Psoas muscle (tissue), 8 donors: ENCODE measurements at regions of chr3 and their contacts with region 1.

Region 1: GRCh38 chr3:46368569-46368968 is 2.2 kb upstream of the CCR5 start:
- DNase-seq: peak; percentile 39 to 74
- ATAC-seq: peak in 3 of 4 donors; percentile 42 to 64 (median 48)
- H3K4me3 ChIP-seq: no peak overlapping the region
- H3K27ac ChIP-seq: no peak overlapping the region
- H3K4me1 ChIP-seq: no peaks in the 10 kb centered on the region
- H3K27me3 ChIP-seq: peaks cover 0 to 4% (median 2%) of the 10 kb centered on the region in 3 donors
- CTCF ChIP-seq: no peak

Region 2: DNA sequence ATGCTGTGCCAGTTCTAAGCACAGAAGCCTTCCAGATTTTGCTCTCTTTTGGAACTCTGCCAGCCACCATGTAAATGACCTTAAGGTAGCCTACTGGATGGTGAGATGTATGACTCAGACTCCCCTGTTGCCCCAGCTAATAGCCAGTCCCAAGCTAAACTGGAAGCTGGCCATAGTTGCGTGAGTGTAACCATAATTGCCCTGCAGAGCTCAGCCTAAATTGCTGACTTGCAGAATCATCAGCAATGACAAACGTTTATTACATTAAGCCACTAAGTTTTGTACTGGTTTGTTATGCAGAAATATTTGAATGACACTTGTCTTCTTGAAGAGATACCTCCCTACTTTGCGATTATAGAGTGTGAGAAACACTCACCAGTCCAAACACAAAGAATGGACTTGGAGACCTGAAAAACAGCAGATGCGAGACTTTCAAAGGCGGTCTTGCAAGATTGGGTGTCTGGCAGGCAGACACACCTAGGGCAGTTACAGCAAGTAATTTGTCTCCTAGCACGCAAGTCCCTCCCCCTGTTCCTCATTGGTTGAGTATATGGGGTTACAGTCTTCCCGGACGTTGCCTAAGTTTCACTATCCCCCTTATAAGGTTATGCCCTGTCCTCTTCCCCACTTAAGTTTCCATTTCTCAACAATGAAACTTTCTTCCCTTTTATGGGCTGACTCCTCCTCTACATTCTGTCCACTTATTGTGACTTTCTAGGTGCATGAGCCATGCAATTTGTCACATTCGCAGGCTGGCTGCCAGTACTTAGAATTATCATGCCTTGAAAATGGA is 257.7 kb before region 1 on chr3:
- intact Hi-C with region 1: loop called in 1 of 2 experiments (anchors 10 kb)
- DNase-seq: no peak
- ATAC-seq: peak; percentile 67 to 82 (median 74)
- H3K4me3 ChIP-seq: no peak overlapping the region
- H3K27ac ChIP-seq: no peak overlapping the region
- H3K4me1 ChIP-seq: peaks cover 9% of the 10 kb centered on the region
- H3K27me3 ChIP-seq: no peaks in the 10 kb centered on the region
- CTCF ChIP-seq: no peak

Region 3: DNA sequence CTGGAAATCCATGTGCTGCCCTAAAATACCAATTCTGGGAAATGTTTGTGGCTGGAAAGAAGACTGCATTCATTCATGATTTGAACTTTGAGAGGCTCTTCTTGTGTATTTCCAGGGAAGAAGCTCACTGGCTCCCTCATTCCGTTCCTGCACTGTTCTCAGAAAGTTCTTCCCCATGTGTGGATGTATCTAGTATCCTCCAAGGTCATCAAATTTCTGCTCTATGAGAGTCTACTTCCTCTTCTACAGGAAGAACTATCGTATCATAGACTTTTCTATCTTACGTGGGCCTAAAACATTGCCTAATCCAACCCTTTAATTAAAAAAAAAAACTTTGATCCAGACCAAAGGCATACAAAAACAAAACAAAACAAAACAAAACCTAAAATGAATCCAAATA is 123.4 kb before region 1 on chr3:
- intact Hi-C with region 1: no loop called
- DNase-seq: no peak
- ATAC-seq: no peak
- H3K4me3 ChIP-seq: no peak overlapping the region
- H3K27ac ChIP-seq: no peak overlapping the region
- H3K4me1 ChIP-seq: no peaks in the 10 kb centered on the region
- H3K27me3 ChIP-seq: peaks cover 0 to 5% (median 0%) of the 10 kb centered on the region in 3 donors
- CTCF ChIP-seq: no peak

Region 4: DNA sequence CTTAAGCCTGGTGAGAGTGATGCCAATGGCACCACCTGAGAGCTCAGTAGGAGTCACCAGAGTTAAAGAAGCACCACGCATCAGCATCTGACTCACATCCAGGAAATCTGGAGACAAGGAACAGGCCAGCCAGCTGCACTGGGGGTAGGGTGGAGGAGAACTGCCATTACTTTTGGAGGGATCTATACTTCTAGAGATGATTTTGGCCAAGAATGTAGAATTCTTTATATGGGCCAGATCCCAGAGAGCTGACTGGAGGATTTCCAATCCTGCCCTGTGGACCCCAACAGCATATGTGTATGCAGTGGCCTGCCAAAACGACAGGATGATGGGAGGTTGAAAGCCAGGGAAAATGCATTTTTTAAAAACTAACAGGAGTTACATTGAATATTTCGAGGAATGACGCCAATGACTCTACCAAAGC is 96.5 kb before region 1 on chr3:
- intact Hi-C with region 1: no loop called
- DNase-seq: no peak
- ATAC-seq: no peak
- H3K4me3 ChIP-seq: no peak overlapping the region
- H3K27ac ChIP-seq: no peak overlapping the region
- H3K4me1 ChIP-seq: no peaks in the 10 kb centered on the region
- H3K27me3 ChIP-seq: peaks cover 0 to 4% (median 0%) of the 10 kb centered on the region in 3 donors
- CTCF ChIP-seq: no peak